Caco-2 (cell line): ENCODE measurements at regions of chr7 and their contacts with region 1.

Region 1: GRCh38 chr7:96303686-96304443 is 18.0 kb downstream of the SLC25A13 start:
- DNase-seq: no peak
- H3K4me3 ChIP-seq: no peak overlapping the region
- H3K4me3 Mint-ChIP-seq: peak overlapping the region; percentile 40
- H3K27ac Mint-ChIP-seq: peak overlapping the region; percentile 72
- H3K4me1 ChIP-seq: peaks cover 70% of the 10 kb centered on the region
- H3K4me1 Mint-ChIP-seq: peaks cover 47% of the 10 kb centered on the region
- H3K27me3 ChIP-seq: no peaks in the 10 kb centered on the region
- H3K27me3 Mint-ChIP-seq: no peaks in the 10 kb centered on the region
- CTCF ChIP-seq: no peak

Region 2: DNA sequence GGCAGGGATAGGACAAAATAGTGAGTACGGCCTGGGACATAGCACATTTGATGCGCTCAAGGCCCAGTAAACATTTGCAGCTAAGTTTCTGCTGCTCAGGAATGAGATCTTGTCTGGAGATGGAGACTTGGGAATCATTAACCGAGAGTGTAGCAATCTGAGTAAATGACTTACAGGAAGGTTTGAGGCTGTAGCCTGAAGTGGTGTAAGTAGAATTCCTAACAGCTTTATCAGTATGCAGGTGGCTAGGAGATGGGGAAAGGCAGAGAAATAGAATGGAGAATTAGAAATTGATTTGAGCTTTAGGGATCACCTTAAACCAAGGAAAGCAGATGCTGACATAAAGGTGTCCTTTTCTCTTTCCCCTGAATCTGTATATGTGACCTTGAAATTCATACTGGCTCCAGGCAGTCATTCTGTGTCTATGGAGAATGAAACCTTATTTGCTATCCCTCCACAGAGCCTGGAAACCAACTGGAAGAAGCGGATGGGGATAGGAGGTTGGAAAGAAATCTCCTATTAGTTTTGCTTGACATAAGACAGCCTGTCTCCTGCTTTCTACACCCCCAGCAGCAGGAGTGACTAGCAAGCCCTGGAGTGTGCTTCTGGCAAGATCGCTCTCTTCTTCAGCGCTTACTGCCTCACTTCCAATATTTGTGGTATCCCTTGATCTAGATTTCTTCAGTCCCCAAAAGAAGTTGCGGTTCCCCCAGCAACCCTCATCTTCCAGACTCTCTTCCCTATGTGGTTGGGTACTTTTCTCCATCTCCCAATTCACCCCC is 862.6 kb before region 1 on chr7:
- CTCF ChIA-PET with region 1: no interaction called
- POLR2A ChIA-PET with region 1: no interaction called
- intact Hi-C with region 1: loop called (anchors 5 kb)
- DNase-seq: peak; percentile 52 to 82
- H3K4me3 ChIP-seq: peak overlapping the region; percentile 19
- H3K4me3 Mint-ChIP-seq: peak overlapping the region; percentile 70
- H3K27ac Mint-ChIP-seq: peak overlapping the region; percentile 85
- H3K4me1 ChIP-seq: peaks cover 61% of the 10 kb centered on the region
- H3K4me1 Mint-ChIP-seq: peaks cover 22% of the 10 kb centered on the region
- H3K27me3 ChIP-seq: no peaks in the 10 kb centered on the region
- H3K27me3 Mint-ChIP-seq: no peaks in the 10 kb centered on the region
- CTCF ChIP-seq: no peak

Region 3: DNA sequence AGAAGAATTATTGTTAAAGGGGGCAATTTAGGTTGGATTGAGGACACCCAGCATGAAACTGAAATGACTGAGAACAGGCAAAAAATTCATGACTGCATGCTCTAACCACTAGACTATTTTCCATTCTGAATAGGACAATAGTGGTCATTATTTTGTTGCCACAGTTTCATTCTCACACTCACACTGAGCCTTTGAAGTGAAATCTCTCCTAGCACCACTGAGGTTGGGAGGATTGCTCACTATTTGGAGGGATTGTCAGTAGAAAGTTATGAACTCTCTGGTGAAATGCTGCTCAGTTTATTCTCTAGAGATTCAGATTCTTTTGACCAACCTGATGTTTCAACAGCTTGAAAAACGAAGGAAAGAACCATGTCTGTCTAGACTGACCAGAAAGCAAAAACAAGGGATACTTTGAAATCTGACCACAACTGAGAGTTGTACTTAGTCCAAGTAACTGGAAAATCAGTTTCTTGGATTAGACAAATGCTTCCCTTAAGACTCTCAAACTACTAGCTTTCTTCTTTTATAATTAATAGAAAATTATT is 340.3 kb before region 1 on chr7:
- CTCF ChIA-PET with region 1: no interaction called
- POLR2A ChIA-PET with region 1: no interaction called
- intact Hi-C with region 1: no loop called
- DNase-seq: no peak
- H3K4me3 ChIP-seq: no peak overlapping the region
- H3K4me3 Mint-ChIP-seq: no peak overlapping the region
- H3K27ac Mint-ChIP-seq: no peak overlapping the region
- H3K4me1 ChIP-seq: no peaks in the 10 kb centered on the region
- H3K4me1 Mint-ChIP-seq: no peaks in the 10 kb centered on the region
- H3K27me3 ChIP-seq: no peaks in the 10 kb centered on the region
- H3K27me3 Mint-ChIP-seq: peaks cover 4% of the 10 kb centered on the region
- CTCF ChIP-seq: no peak

Region 4: GRCh38 chr7:96084881-96085551 is 218.8 kb before region 1 on chr7:
- CTCF ChIA-PET with region 1: no interaction called
- POLR2A ChIA-PET with region 1: no interaction called
- intact Hi-C with region 1: no loop called
- DNase-seq: no peak
- H3K4me3 ChIP-seq: no peak overlapping the region
- H3K4me3 Mint-ChIP-seq: no peak overlapping the region
- H3K27ac Mint-ChIP-seq: no peak overlapping the region
- H3K4me1 ChIP-seq: no peaks in the 10 kb centered on the region
- H3K4me1 Mint-ChIP-seq: no peaks in the 10 kb centered on the region
- H3K27me3 ChIP-seq: no peaks in the 10 kb centered on the region
- H3K27me3 Mint-ChIP-seq: no peaks in the 10 kb centered on the region
- CTCF ChIP-seq: no peak

Region 5: DNA sequence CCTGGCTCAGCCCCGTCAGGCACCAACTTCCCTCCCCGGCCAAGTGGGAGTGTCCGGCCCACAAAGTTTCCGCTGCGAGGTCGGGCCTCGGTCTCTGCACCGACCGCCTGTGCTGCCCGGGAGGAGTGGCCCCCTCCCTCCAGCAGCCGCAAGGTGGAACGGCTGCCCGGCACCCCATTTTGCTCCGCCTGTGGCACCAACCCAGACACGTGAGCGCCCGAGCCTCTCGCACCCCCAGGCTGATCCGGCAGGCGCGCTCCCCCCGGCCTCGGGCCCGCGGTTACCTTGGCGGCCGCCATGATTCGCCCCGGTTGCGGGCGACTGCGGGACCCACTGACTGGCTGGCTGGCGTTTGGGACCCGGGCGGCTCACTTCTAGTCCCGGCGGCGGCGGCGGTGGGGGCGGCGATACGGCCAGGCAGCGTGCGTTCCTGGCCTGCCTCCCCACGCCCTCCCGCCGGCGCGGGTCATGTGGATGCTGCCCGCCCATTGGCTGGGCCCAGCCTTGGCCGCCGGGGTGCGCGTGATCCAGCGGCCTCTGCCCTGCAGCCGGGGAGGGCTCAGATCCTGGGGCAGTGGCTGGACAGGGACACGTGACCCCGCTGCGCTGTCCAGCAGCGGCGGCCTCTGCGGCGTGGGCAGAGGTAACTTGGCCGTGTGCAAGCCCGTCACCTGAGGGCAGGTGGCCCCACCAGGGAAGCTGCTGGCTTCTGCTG is 17.9 kb after region 1 on chr7 and contains the start of gene SLC25A13:
- CTCF ChIA-PET with region 1: no interaction called
- POLR2A ChIA-PET with region 1: interaction called, 4 read pairs
- intact Hi-C with region 1: loop called (anchors 1 kb)
- DNase-seq: peak; percentile 95 to 97
- H3K4me3 ChIP-seq: peak within 1 kb of the TSS; percentile 90
- H3K4me3 Mint-ChIP-seq: peak within 1 kb of the TSS; percentile 90
- H3K27ac Mint-ChIP-seq: peak within 1 kb of the TSS; percentile 89
- H3K4me1 ChIP-seq: peaks cover 14% of the 10 kb centered on the region
- H3K4me1 Mint-ChIP-seq: peaks cover 15% of the 10 kb centered on the region
- H3K27me3 ChIP-seq: no peaks in the 10 kb centered on the region
- H3K27me3 Mint-ChIP-seq: no peaks in the 10 kb centered on the region
- CTCF ChIP-seq: no peak
- total RNA-seq, gene SLC25A13: 100 and 102 TPM in 2 replicates

Region 6: DNA sequence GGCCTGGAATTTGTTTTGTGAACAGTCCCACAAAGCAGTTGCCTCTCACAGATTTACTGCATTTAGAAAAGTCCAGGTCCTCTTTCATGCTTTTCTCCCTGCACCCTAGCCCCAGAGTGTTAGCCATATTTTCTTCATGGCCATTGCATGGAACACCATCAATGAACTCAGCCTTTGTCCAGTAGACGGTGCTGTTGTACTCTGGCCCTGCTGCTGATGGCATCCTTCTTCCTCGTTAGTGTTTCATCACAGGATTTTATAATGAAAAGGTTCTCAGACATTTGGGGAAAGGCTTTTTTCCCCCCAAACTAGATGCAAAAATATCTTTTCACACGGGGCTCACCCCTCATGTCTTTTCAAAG is 111.0 kb after region 1 on chr7:
- CTCF ChIA-PET with region 1: no interaction called
- POLR2A ChIA-PET with region 1: no interaction called
- intact Hi-C with region 1: loop called (anchors 1 kb)
- DNase-seq: peak; percentile 37 to 45
- H3K4me3 ChIP-seq: no peak overlapping the region
- H3K4me3 Mint-ChIP-seq: no peak overlapping the region
- H3K27ac Mint-ChIP-seq: peak overlapping the region; percentile 33
- H3K4me1 ChIP-seq: peaks cover 18% of the 10 kb centered on the region
- H3K4me1 Mint-ChIP-seq: peaks cover 15% of the 10 kb centered on the region
- H3K27me3 ChIP-seq: no peaks in the 10 kb centered on the region
- H3K27me3 Mint-ChIP-seq: no peaks in the 10 kb centered on the region
- CTCF ChIP-seq: peak; percentile 27 to 45

Region 7: DNA sequence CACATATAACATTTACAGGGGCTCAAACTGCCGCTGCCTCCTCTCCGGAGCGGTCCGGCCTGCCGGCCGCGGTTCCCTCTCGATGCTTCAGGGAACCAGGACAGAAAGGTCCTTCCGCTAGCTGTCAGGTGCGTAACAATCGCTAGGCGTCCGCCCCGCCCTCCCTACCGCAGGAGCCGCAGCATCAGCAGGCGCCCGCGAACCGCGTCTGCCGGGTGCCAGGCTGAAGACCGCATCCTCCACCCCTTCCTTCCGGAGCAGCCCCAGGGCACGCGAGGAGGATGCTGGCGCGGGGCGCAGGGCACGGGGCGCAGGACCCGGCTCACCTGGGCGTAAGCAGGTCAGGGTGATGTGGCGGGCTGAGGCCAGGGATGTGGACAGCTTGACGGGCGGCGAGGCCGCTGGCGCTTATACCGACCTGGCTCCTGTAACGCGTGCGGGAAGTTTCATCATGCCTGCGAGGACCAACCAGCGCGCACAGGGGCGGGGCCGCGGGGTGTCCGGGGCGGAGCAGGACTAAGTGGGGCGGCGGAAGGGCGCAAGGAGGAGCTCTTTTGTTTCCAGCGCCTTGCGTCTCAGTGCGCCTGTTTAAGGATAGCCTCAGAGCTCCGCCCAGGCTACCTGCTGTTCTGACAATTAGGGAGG is 1568.3 kb after region 1 on chr7 and contains the start of gene ASNS:
- CTCF ChIA-PET with region 1: no interaction called
- POLR2A ChIA-PET with region 1: no interaction called
- intact Hi-C with region 1: loop called (anchors 5 kb)
- DNase-seq: peak; percentile 96 to 98
- H3K4me3 ChIP-seq: peak within 1 kb of the TSS; percentile 97
- H3K4me3 Mint-ChIP-seq: peak within 1 kb of the TSS; percentile 91
- H3K27ac Mint-ChIP-seq: peak within 1 kb of the TSS; percentile 92
- H3K4me1 ChIP-seq: no peaks in the 10 kb centered on the region
- H3K4me1 Mint-ChIP-seq: peaks cover 6% of the 10 kb centered on the region
- H3K27me3 ChIP-seq: no peaks in the 10 kb centered on the region
- H3K27me3 Mint-ChIP-seq: no peaks in the 10 kb centered on the region
- CTCF ChIP-seq: no peak
- total RNA-seq, gene ASNS: 295 and 374 TPM in 2 replicates